Heart right ventricle (tissue), 16 donors: ENCODE measurements at regions of chr3 and their contacts with region 1.

Region 1: GRCh38 chr3:133887803-133888559 is 7.7 kb downstream of the RAB6B start:
- DNase-seq: no peak
- ATAC-seq: no peak
- H3K4me3 ChIP-seq: no peak overlapping the region
- H3K27ac ChIP-seq: no peak overlapping the region
- H3K4me1 ChIP-seq: peaks cover 0 to 49% (median 23%) of the 10 kb centered on the region in 9 donors
- H3K27me3 ChIP-seq: peaks cover 0 to 3% (median 0%) of the 10 kb centered on the region in 7 donors
- CTCF ChIP-seq: no peak

Region 2: GRCh38 chr3:133851266-133851906 is 36.6 kb before region 1 on chr3:
- intact Hi-C with region 1: loop called in 1 of 10 experiments (anchors 5 kb)
- DNase-seq: no peak
- ATAC-seq: no peak
- H3K4me3 ChIP-seq: no peak overlapping the region
- H3K27ac ChIP-seq: no peak overlapping the region
- H3K4me1 ChIP-seq: peaks cover 0 to 30% (median 22%) of the 10 kb centered on the region in 9 donors
- H3K27me3 ChIP-seq: no peaks in the 10 kb centered on the region
- CTCF ChIP-seq: no peak

Region 3: DNA sequence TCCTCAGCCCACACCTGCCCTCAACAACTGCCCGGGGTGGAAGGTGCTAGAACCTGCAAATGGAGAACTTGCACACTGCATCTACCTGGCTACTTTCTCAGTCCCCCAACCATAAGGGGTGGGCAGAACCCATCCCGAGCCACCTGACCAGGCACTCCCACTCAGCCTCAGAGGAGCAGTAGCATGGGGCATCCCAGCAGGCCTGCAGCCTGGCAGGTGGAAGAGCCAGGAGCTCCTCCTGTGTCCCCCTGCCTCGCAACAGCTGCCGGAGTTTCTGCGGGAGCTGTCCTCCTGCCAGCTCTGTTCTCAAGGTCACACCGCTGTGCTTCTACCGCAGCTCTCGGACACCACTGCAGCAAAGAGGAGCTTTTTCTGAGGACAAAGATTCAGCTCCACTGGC is 19.8 kb before region 1 on chr3:
- intact Hi-C with region 1: no loop called
- DNase-seq: peak in 1 of 2 donors; percentile 25
- ATAC-seq: peak in 7 of 8 donors; percentile 32 to 59 (median 39)
- H3K4me3 ChIP-seq: no peak overlapping the region
- H3K27ac ChIP-seq: peak overlapping the region in 1 of 10 donors; percentile 2
- H3K4me1 ChIP-seq: peaks cover 0 to 26% (median 11%) of the 10 kb centered on the region in 9 donors
- H3K27me3 ChIP-seq: no peaks in the 10 kb centered on the region
- CTCF ChIP-seq: no peak

Region 4: GRCh38 chr3:133938770-133939462 is 50.9 kb after region 1 on chr3:
- intact Hi-C with region 1: no loop called
- DNase-seq: no peak
- ATAC-seq: peak in 4 of 8 donors; percentile 29 to 54 (median 44)
- H3K4me3 ChIP-seq: no peak overlapping the region
- H3K27ac ChIP-seq: no peak overlapping the region
- H3K4me1 ChIP-seq: peaks cover 3 to 23% (median 11%) of the 10 kb centered on the region in 9 donors
- H3K27me3 ChIP-seq: no peaks in the 10 kb centered on the region
- CTCF ChIP-seq: peak in 7 of 9 donors; percentile 5 to 53 (median 28)